Calu3 (cell line): ENCODE measurements at regions of chr3 and their contacts with region 1.

Region 1: GRCh38 chr3:354432-354831 is 157.9 kb downstream of the CHL1 start:
- DNase-seq: peak; percentile 54
- H3K4me3 Mint-ChIP-seq: no peak overlapping the region
- H3K27ac Mint-ChIP-seq: no peak overlapping the region
- H3K4me1 Mint-ChIP-seq: peaks cover 6% of the 10 kb centered on the region
- H3K27me3 Mint-ChIP-seq: no peaks in the 10 kb centered on the region
- CTCF ChIP-seq: peak; percentile 41

Region 2: DNA sequence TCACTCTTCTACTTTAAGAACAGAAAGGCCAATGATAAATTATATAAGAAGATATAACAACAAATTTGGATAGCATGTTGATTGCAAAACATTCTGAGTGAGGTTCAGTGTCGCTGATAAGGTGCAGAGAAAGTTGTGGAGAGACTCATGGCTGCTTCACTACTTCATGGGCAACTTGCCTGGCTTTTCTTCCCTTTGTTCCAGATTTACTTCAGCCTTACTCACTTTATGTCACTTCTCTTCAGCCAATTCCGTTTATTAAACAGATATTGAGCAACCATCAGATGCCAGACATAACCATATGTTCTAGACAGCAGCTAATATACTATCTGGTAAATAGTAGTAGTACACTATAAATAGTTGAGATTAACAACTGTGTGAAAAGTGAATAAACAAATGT is 307.9 kb before region 1 on chr3:
- CTCF ChIA-PET with region 1: interaction called, 43 read pairs
- intact Hi-C with region 1: loop called (anchors 1 kb)
- DNase-seq: no peak
- H3K4me3 Mint-ChIP-seq: no peak overlapping the region
- H3K27ac Mint-ChIP-seq: no peak overlapping the region
- H3K4me1 Mint-ChIP-seq: peaks cover 7% of the 10 kb centered on the region
- H3K27me3 Mint-ChIP-seq: no peaks in the 10 kb centered on the region
- CTCF ChIP-seq: no peak

Region 3: GRCh38 chr3:195666-196065 is 158.8 kb before region 1 on chr3:
- CTCF ChIA-PET with region 1: interaction called, 4 read pairs
- intact Hi-C with region 1: loop called (anchors 1 kb)
- DNase-seq: no peak
- H3K4me3 Mint-ChIP-seq: no peak overlapping the region
- H3K27ac Mint-ChIP-seq: no peak overlapping the region
- H3K4me1 Mint-ChIP-seq: peaks cover 7% of the 10 kb centered on the region
- H3K27me3 Mint-ChIP-seq: peaks cover 27% of the 10 kb centered on the region
- CTCF ChIP-seq: no peak

Region 4: GRCh38 chr3:207973-208372 is 146.5 kb before region 1 on chr3:
- CTCF ChIA-PET with region 1: interaction called, 24 read pairs
- intact Hi-C with region 1: no loop called
- DNase-seq: no peak
- H3K4me3 Mint-ChIP-seq: no peak overlapping the region
- H3K27ac Mint-ChIP-seq: no peak overlapping the region
- H3K4me1 Mint-ChIP-seq: no peaks in the 10 kb centered on the region
- H3K27me3 Mint-ChIP-seq: peaks cover 11% of the 10 kb centered on the region
- CTCF ChIP-seq: no peak

Region 5: DNA sequence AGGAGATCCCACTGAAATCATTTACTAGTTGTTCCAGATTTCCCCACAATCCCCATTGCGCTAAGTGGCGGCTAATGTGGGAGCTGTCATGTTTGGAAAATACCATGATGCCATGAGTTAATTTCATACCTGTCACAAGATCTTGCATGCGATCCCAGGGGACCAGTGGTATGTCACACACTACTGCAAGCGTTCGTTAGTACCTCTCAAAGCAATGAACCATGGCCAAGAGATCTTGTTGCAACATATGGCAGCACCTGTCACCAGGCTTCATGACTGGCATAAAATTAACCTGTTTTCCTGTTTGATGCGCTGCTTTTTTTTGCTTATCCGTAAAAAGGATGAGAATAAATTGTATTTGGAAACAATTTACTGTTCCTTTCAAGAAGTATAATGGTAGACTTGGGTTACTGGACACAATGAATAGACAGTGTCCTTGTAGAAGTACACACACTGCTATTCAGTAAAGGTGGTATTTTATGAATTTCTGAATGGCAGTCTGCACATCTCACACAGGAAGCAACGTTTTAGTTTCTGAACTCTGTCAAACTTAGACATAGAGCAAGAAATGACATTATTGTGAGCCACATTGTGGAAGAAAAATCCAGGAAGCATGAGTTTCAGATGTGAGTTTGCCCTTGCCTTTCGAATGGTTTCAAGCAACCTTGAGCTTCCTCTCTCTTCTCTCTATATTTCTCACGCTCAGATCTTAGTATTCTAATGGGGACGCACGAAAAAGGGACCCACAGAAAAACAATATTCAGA is 76.0 kb before region 1 on chr3:
- CTCF ChIA-PET with region 1: interaction called, 3 read pairs
- intact Hi-C with region 1: loop called (anchors 5 kb)
- DNase-seq: no peak
- H3K4me3 Mint-ChIP-seq: no peak overlapping the region
- H3K27ac Mint-ChIP-seq: no peak overlapping the region
- H3K4me1 Mint-ChIP-seq: peaks cover 32% of the 10 kb centered on the region
- H3K27me3 Mint-ChIP-seq: no peaks in the 10 kb centered on the region
- CTCF ChIP-seq: no peak

Region 6: DNA sequence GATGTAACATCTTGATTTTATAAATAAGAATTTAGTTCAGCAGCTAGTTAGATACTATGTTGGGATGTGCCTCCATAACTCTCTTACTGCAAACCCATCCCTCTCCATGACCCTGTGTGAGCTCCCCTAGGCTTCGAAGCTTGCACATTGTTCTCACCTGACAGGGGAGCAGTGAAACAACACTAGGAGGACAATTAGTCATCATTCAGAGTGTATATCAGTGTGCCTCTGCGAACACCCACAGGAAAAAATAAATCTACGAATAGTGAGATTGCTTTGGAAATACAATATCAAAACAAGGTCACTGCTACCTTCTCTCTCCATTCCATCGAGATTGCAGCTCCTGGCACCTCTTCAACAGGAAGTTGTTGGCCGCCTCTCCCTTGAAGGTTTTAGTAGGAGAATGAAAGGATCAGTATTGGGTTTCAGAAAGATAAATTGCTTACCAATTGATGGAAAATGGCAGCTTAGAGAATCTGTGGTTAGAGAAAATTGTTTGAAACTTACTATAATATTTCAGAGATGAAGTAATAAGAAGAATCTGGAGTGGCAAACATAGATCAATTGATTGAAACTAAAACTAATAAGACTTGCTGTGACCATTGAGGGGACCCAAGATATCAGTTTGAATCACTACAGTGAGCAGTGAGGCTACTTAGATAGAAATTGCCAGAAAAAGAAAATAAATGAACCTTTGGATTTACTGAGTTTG is 54.7 kb before region 1 on chr3:
- CTCF ChIA-PET with region 1: interaction called, 8 read pairs
- intact Hi-C with region 1: loop called (anchors 5 kb)
- DNase-seq: peak; percentile 41
- H3K4me3 Mint-ChIP-seq: no peak overlapping the region
- H3K27ac Mint-ChIP-seq: no peak overlapping the region
- H3K4me1 Mint-ChIP-seq: peaks cover 24% of the 10 kb centered on the region
- H3K27me3 Mint-ChIP-seq: no peaks in the 10 kb centered on the region
- CTCF ChIP-seq: no peak

Region 7: GRCh38 chr3:331881-332280 is 22.6 kb before region 1 on chr3:
- CTCF ChIA-PET with region 1: no interaction called
- intact Hi-C with region 1: no loop called
- DNase-seq: no peak
- H3K4me3 Mint-ChIP-seq: no peak overlapping the region
- H3K27ac Mint-ChIP-seq: no peak overlapping the region
- H3K4me1 Mint-ChIP-seq: no peaks in the 10 kb centered on the region
- H3K27me3 Mint-ChIP-seq: no peaks in the 10 kb centered on the region
- CTCF ChIP-seq: no peak

Region 8: DNA sequence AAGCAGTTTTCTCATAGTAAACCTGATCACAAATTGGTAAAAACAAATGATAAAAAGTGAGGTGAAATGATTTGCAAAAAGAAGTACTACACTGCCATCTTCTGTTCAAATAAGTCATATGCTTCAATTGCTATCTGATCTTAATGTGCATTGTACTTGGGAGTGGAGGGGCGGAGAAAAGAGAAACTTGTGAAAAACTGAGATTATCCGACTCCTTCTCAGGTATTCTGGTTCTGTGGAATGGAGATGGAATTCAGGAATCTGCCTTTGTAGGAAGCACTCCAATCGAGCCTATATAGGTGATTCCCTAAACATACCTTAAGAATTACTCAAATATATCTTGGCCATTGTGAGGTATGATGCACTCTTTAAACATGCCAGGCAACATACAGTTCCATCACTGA is 22.7 kb after region 1 on chr3:
- CTCF ChIA-PET with region 1: no interaction called
- intact Hi-C with region 1: loop called (anchors 1 kb)
- DNase-seq: no peak
- H3K4me3 Mint-ChIP-seq: no peak overlapping the region
- H3K27ac Mint-ChIP-seq: no peak overlapping the region
- H3K4me1 Mint-ChIP-seq: no peaks in the 10 kb centered on the region
- H3K27me3 Mint-ChIP-seq: no peaks in the 10 kb centered on the region
- CTCF ChIP-seq: no peak